ENCODE measurements at regions of chr21 and their contacts with region 1.

Region 1: DNA sequence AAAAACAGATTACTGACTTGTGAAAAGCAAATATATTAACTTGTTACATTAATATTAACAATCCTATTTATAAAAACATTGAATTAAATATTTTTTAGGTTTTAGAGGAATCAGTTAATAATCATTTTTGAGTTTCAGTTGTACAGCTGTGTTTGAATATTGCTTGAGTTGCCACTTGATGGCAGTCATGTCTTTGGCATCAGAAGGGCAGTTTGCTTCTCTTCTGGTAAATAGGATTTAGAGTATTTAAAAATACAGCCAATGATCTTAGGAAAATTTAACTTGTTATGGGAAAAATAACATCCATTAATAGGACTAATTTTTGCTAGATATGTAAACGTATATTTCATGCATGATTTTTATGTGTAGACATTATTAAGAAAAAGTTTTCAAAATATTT is 234.1 kb downstream of the NCAM2 start:
- DNase-seq: peak; percentile 33
- H3K4me3 ChIP-seq: no peak overlapping the region
- CTCF ChIP-seq: peak; percentile 36

Region 2: GRCh38 chr21:20943561-20943997 is 288.7 kb before region 1 on chr21:
- CTCF ChIA-PET with region 1: no interaction called
- POLR2A ChIA-PET with region 1: no interaction called
- DNase-seq: no peak
- H3K4me3 ChIP-seq: no peak overlapping the region
- CTCF ChIP-seq: no peak

Region 3: GRCh38 chr21:21216047-21216446 is 16.3 kb before region 1 on chr21:
- CTCF ChIA-PET with region 1: interaction called, 12 read pairs
- POLR2A ChIA-PET with region 1: no interaction called
- DNase-seq: no peak
- H3K4me3 ChIP-seq: no peak overlapping the region
- CTCF ChIP-seq: no peak

Region 4: DNA sequence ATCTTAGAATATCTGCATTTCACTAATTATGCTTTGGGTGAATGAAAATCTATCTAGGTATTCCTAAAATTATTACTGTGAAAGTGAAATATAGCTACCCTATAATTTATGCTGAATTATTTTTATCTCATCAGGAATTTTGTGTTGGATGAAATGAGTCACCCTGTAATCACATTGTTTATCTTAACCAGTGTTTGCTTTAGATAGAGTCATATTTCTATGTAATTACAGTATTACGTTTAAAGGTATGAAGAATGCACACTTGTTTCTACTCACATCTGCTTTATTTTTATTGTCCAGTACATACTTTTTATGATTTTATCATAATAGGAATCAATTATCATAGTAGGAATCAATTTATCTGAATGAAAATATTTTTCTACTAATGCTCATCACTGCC is 15.1 kb after region 1 on chr21:
- CTCF ChIA-PET with region 1: interaction called, 11 read pairs
- POLR2A ChIA-PET with region 1: no interaction called
- DNase-seq: no peak
- H3K4me3 ChIP-seq: no peak overlapping the region
- CTCF ChIP-seq: no peak

Region 5: GRCh38 chr21:21373969-21374368 is 141.6 kb after region 1 on chr21:
- CTCF ChIA-PET with region 1: interaction called, 10 read pairs
- POLR2A ChIA-PET with region 1: no interaction called
- DNase-seq: no peak
- H3K4me3 ChIP-seq: no peak overlapping the region
- CTCF ChIP-seq: peak; percentile 29

Region 6: GRCh38 chr21:21921421-21922232 is 689.3 kb after region 1 on chr21:
- CTCF ChIA-PET with region 1: interaction called, 15 read pairs
- POLR2A ChIA-PET with region 1: no interaction called
- DNase-seq: no peak
- H3K4me3 ChIP-seq: no peak overlapping the region
- CTCF ChIP-seq: peak; percentile 39

Region 7: GRCh38 chr21:22791986-22792560 is 1559.8 kb after region 1 on chr21:
- CTCF ChIA-PET with region 1: interaction called, 10 read pairs
- POLR2A ChIA-PET with region 1: no interaction called
- DNase-seq: no peak
- H3K4me3 ChIP-seq: no peak overlapping the region
- CTCF ChIP-seq: peak; percentile 40